ENCODE measurements at regions of chr6 and their contacts with region 1.

Region 1: DNA sequence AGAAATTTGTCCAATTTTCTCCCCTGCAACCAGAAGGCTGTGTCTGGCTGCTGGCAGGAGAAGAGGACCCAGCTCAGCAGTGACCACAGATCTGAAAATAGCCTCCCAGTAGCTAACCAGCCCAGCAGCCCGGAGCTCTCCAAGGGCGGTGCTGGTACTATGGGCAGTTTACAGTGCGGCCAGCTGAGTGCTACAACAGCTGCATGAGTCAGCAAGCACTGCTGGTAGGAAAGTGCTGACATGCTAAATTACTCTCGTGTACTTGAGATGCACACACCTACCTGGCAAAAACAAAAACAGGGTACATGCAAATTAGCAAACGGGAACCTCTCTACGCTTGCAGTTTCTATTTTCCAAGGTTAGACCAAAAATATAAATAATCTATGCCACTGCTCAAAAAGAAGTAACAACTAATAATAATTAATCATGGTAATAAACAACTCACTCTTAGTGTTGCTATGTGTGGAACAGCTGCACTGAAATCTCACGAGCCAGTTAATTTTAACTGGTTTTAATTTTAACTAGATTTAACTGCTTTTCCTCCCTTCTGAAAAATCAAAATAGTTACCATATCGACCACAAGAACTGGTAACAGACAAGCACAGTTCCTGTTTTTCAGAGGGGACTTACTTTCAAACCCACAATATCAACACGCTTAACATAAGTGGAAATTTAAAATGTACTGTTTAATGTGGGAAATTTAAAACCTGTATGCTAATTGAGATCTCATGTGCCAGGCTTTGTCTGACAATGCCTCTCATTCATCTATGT is 10.8 kb downstream of the BACH2 start:
- DNase-seq: peak; percentile 89
- H3K4me3 Mint-ChIP-seq: no peak overlapping the region
- H3K27ac Mint-ChIP-seq: no peak overlapping the region
- H3K4me1 Mint-ChIP-seq: peaks cover 9% of the 10 kb centered on the region
- H3K27me3 Mint-ChIP-seq: no peaks in the 10 kb centered on the region
- CTCF ChIP-seq: no peak

Region 2: DNA sequence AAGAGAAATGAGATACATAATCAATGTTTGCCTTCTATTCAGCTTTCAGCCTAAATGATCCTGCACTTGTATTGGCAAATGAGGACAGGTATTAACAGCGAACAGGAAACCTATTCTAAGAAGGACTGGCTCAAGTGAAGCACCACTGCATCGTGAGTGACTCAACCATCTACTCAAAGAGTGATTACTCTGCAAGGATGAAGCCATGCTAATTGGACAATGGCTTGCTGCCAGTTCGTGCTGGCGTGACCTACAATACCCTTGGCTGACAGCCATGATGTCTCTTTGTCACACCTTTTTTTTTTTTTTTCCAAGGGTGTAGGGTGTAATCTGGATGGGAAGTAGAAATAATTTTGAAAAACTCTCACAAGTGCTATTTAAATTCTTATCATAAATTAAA is 286.6 kb before region 1 on chr6:
- CTCF ChIA-PET with region 1: interaction called, 4 read pairs
- POLR2A ChIA-PET with region 1: interaction called, 20 read pairs
- intact Hi-C with region 1: no loop called
- DNase-seq: peak; percentile 95
- H3K4me3 Mint-ChIP-seq: no peak overlapping the region
- H3K27ac Mint-ChIP-seq: no peak overlapping the region
- H3K4me1 Mint-ChIP-seq: peaks cover 13% of the 10 kb centered on the region
- H3K27me3 Mint-ChIP-seq: no peaks in the 10 kb centered on the region
- CTCF ChIP-seq: no peak

Region 3: GRCh38 chr6:90062667-90063066 is 223.1 kb before region 1 on chr6:
- CTCF ChIA-PET with region 1: no interaction called
- POLR2A ChIA-PET with region 1: no interaction called
- intact Hi-C with region 1: no loop called
- DNase-seq: peak; percentile 57
- H3K4me3 Mint-ChIP-seq: no peak overlapping the region
- H3K27ac Mint-ChIP-seq: no peak overlapping the region
- H3K4me1 Mint-ChIP-seq: peaks cover 13% of the 10 kb centered on the region
- H3K27me3 Mint-ChIP-seq: no peaks in the 10 kb centered on the region
- CTCF ChIP-seq: no peak

Region 4: GRCh38 chr6:90098001-90098531 is 187.7 kb before region 1 on chr6:
- CTCF ChIA-PET with region 1: interaction called, 11 read pairs
- POLR2A ChIA-PET with region 1: interaction called, 10 read pairs
- intact Hi-C with region 1: loop called (anchors 1 kb)
- DNase-seq: peak; percentile 97
- H3K4me3 Mint-ChIP-seq: no peak overlapping the region
- H3K27ac Mint-ChIP-seq: peak overlapping the region; percentile 96
- H3K4me1 Mint-ChIP-seq: peaks cover 43% of the 10 kb centered on the region
- H3K27me3 Mint-ChIP-seq: no peaks in the 10 kb centered on the region
- CTCF ChIP-seq: peak; percentile 40

Region 5: GRCh38 chr6:90216072-90216977 is 69.5 kb before region 1 on chr6:
- CTCF ChIA-PET with region 1: interaction called, 13 read pairs
- POLR2A ChIA-PET with region 1: interaction called, 47 read pairs
- intact Hi-C with region 1: loop called (anchors 10 kb)
- DNase-seq: peak; percentile 24
- H3K4me3 Mint-ChIP-seq: no peak overlapping the region
- H3K27ac Mint-ChIP-seq: no peak overlapping the region
- H3K4me1 Mint-ChIP-seq: no peaks in the 10 kb centered on the region
- H3K27me3 Mint-ChIP-seq: no peaks in the 10 kb centered on the region
- CTCF ChIP-seq: no peak

Region 6: GRCh38 chr6:90472744-90473143 is 186.9 kb after region 1 on chr6:
- CTCF ChIA-PET with region 1: interaction called, 54 read pairs
- POLR2A ChIA-PET with region 1: interaction called, 5 read pairs
- intact Hi-C with region 1: no loop called
- DNase-seq: peak; percentile 25
- H3K4me3 Mint-ChIP-seq: no peak overlapping the region
- H3K27ac Mint-ChIP-seq: no peak overlapping the region
- H3K4me1 Mint-ChIP-seq: peaks cover 44% of the 10 kb centered on the region
- H3K27me3 Mint-ChIP-seq: no peaks in the 10 kb centered on the region
- CTCF ChIP-seq: no peak

Measured in MCF 10A (cell line).